ENCODE measurements at regions of chr18 and their contacts with region 1.

Region 1: GRCh38 chr18:52920665-52921064 is 580.7 kb downstream of the DCC start:
- DNase-seq: no peak
- H3K4me3 ChIP-seq: no peak overlapping the region
- CTCF ChIP-seq: no peak
- POLR2A ChIP-seq: no peak

Region 2: DNA sequence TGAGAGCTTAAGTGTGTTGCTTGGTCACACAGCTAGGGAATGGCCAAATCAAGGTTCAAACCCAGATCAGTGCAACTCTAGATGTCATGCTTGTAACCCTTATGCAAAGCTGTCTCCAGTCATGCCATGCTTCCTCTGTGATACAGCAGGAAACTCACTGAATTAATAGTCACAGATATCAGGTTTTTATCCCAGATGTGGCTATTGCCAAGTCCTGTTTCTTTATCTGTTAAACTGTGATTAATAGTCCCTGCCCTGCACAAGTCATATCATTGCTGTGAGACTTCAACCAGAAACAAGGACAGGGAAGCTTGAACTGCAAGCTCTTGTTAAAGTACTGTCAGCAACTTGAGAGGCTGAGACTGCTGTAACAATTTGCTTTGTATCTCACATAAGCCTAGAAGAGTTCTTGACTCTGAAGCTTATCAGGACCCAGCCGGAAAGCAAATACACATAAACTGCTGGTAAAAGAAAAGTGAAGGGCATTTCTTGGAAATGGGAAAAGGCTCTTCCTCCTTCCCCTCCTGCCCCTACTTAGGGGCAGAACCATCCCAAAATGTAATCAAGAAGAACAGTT is 28.3 kb after region 1 on chr18:
- intact Hi-C with region 1: loop called (anchors 1 kb)
- DNase-seq: no peak
- H3K4me3 ChIP-seq: no peak overlapping the region
- CTCF ChIP-seq: no peak
- POLR2A ChIP-seq: no peak